Adrenal gland (tissue), 19 donors: ENCODE measurements at regions of chr11 and their contacts with region 1.

Region 1: GRCh38 chr11:61477727-61478148 is 30.8 kb upstream of the LRRC10B start:
- DNase-seq: peak in 6 of 7 donors; percentile 33 to 75 (median 47)
- H3K4me3 ChIP-seq: no peak overlapping the region
- H3K27ac ChIP-seq: no peak overlapping the region
- H3K4me1 ChIP-seq: peaks cover 0 to 19% of the 10 kb centered on the region in 2 donors
- H3K27me3 ChIP-seq: no peaks in the 10 kb centered on the region
- CTCF ChIP-seq: peak; percentile 79 to 95 (median 88)
- POLR2A ChIP-seq: no peak

Region 2: DNA sequence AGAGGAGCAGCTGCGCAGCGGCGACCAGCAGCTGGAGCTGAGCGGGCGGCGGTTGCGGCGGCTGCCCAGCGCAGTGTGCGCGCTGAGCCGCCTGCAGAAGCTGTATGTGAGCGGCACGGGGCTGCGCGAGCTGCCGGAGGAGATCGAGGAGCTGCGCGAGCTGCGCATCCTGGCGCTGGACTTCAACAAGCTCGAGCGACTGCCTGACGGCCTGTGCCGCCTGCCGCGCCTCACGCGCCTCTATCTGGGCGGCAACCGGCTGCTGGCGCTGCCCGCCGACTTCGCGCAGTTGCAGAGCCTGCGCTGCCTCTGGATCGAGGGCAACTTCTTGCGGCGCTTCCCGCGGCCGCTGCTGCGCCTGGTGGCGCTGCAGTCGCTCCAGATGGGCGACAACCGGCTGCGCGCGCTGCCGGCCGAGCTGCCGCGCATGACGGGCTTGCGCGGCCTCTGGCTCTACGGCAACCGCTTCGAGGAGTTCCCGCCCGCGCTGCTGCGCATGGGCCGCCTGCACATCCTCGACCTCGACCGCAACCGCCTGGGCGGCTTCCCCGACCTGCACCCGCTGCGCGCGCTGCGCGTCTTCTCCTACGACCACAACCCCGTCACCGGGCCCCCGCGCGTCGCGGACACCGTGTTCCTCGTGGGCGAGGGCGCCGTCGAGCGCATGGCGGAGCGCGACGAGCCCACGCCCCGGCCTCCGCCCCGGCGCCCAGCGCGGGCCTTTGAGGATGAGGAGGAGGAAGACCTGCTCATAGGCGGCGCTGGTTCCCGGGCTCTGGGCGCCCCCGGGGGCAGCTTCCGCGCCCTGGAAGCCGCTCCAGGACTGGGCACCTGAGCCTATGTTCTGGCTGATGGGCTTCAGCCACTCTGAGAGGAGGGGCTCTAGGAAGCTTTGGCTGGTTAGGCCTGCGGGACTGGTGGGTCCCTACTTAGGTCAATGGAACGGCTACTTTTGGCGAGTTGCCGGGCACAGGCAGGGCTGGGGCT is 31.6 kb after region 1 on chr11:
- intact Hi-C with region 1: loop called in 1 of 2 experiments (anchors 5 kb)
- DNase-seq: peak; percentile 65 to 83 (median 77)
- H3K4me3 ChIP-seq: peak overlapping the region in 1 of 4 donors; percentile 18
- H3K27ac ChIP-seq: peak overlapping the region in 1 of 5 donors; percentile 69
- H3K4me1 ChIP-seq: peaks cover 8 to 16% of the 10 kb centered on the region in 2 donors
- H3K27me3 ChIP-seq: peaks cover 24% of the 10 kb centered on the region
- CTCF ChIP-seq: peak; percentile 30 to 64 (median 54)
- POLR2A ChIP-seq: no peak

Region 3: DNA sequence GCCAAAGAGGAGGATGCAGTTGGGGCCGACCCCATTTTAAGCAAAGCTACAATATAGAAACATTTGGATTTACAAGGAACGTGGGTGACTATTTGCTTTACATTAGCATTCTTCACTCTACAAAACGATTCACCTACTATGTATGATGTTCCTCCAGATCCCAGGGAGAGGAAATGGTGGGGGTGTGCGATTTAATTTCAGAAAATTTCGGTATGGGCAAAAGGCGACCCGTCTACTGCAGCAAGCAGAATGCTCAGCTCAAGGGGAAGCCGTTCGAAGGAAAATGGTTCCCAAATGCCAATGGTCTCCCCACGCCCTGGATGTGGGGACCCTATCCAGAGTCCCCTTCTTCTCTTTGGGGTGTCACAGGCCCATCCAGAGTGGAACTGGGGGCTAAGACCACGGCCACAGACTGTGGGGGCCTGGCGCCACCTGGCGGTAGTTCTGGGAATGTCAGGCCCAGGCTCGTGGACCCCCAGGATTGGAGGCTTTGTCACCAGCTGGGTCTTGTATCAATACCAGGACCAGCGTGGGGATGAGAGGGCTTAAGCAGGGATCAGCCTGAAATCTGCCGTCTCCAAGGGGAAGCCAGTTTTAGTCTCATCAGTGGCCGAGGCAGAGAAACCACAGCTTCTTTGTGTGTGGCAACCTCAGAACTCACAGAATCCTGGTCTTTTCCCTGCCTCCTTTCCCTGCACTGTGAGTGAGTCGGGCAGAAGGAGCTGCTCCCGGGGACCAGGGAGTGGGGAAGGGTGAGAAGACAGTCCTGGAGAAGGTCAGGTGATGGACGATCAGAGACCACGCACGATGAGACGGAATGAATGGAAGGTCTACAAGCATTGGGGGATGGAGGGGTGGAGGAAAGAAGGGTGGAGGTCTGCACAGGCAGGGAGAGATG is 39.2 kb after region 1 on chr11:
- intact Hi-C with region 1: loop called (anchors 2 to 5 kb)
- DNase-seq: peak in 3 of 7 donors; percentile 32 to 65 (median 42)
- H3K4me3 ChIP-seq: no peak overlapping the region
- H3K27ac ChIP-seq: no peak overlapping the region
- H3K4me1 ChIP-seq: peaks cover 0 to 6% of the 10 kb centered on the region in 2 donors
- H3K27me3 ChIP-seq: no peaks in the 10 kb centered on the region
- CTCF ChIP-seq: peak; percentile 89 to 99 (median 96)
- POLR2A ChIP-seq: no peak

Region 4: DNA sequence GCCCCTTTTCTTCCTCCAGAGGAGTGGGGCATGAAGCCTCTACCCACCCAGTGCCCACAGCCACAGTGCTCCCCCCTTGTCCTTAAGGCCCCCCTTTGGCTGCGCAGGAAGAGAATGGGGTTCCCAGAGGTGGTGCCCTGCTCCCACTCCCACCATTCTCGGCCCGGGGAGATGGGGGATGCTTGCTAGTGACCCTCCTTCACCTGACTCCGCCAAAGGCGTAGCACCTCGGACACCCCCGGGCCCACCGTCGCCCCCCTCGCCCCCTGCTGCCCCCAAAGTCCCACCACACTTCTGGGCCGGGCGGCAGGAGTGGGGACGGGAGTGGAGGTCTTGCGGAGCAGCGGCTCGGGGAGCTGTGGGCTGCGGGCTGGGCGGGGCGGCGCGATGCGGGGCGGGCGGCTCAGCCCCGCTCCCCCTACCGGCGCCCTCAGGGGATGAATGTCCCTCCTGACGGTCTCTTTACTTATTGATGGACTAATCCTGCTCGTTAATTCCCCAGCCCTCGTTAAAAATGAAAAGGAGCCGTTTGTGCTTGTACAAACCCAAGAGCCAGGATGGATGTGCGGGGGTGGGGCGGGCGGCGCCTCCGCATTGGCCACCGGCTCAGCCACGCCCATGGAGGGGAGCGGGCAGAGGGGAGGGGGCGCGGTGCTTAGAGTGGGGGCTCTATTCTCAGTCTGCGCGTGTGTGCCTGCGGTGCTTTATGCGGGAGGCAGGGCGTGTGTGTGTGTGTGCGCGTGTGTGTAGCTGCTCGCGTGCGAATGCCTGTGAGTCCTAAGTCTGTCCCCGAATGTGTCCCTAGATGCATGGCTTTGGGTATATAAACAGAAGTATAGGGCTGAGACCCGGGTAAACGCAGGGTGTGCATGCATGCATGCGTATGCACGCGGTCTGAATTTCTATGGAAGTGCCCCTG is 77.6 kb after region 1 on chr11:
- intact Hi-C with region 1: no loop called
- DNase-seq: no peak
- H3K4me3 ChIP-seq: no peak overlapping the region
- H3K27ac ChIP-seq: peak overlapping the region in 1 of 5 donors; percentile 34
- H3K4me1 ChIP-seq: no peaks in the 10 kb centered on the region
- H3K27me3 ChIP-seq: peaks cover 23% of the 10 kb centered on the region
- CTCF ChIP-seq: no peak
- POLR2A ChIP-seq: no peak

Region 5: DNA sequence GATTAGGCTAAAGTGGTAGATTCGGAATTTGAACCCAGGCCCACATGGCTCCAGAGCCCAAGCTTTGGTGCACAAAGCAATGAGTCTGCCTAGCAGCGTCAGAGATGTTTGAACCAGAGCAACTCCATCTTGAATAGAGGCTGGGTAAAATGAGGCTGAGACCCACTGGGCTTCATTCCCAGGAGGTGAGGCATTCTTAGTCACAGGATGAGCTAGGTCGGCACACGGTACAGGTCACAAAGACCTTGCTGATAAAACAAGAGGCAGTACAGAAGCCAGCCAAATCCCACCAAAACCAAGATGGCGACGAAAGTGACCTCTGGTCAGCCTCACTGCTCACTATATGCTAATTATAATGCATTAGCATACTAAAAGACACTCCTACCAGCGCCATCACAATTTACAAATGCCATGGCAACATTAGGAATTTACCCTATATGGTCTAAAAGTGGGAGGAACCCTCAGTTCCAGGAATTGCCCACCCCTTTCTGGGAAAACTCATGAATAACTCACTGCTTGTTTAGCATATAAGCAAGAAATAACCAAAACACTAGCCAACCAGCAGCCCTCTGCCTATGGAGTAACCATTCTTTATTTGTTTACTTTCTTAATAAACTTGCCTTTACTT is 162.2 kb after region 1 on chr11:
- intact Hi-C with region 1: loop called in 1 of 2 experiments (anchors 5 kb)
- DNase-seq: peak in 1 of 7 donors; percentile 35
- H3K4me3 ChIP-seq: no peak overlapping the region
- H3K27ac ChIP-seq: no peak overlapping the region
- H3K4me1 ChIP-seq: peaks cover 0 to 12% of the 10 kb centered on the region in 2 donors
- H3K27me3 ChIP-seq: no peaks in the 10 kb centered on the region
- CTCF ChIP-seq: no peak
- POLR2A ChIP-seq: no peak

Region 6: GRCh38 chr11:61695917-61696316 is 218.2 kb after region 1 on chr11:
- intact Hi-C with region 1: no loop called
- DNase-seq: peak; percentile 73 to 92 (median 90)
- H3K4me3 ChIP-seq: peak overlapping the region in 1 of 4 donors; percentile 22
- H3K27ac ChIP-seq: peak overlapping the region in 4 of 5 donors; percentile 13 to 78 (median 73)
- H3K4me1 ChIP-seq: peaks cover 51 to 76% of the 10 kb centered on the region in 2 donors
- H3K27me3 ChIP-seq: no peaks in the 10 kb centered on the region
- CTCF ChIP-seq: peak in 1 of 6 experiments; percentile 12
- POLR2A ChIP-seq: no peak